B cell (primary cell): ENCODE measurements at regions of chr17 and their contacts with region 1.

Region 1: DNA sequence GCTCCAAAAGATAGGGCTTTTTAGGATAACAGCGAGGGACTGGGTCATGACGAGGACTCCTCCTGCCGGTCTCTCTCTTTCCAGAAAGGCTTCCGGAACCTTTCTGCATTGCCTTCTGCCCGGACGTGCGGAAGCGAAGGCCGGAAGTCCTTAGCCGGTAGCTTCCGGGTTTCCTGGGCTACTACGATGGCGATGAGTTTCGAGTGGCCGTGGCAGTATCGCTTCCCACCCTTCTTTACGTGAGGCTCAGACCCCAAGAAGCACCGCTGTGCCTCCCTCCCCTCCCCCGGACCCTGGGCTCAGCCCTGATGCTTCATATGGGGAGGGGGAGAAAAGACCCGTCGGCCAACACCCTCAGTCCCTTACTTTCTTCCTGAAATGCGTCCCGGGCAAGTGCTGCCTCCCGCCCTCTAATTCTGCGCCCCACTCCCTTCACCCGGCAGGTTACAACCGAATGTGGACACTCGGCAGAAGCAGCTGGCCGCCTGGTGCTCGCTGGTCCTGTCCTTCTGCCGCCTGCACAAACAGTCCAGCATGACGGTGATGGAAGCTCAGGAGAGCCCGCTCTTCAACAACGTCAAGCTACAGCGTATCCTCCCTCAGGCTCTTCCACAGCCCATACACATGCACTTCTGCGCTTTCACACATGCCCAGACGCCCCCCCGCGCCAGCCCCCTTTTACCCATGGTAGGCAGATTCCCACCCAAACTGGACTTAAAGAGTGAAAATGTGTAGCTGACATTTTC is at the start of gene VPS25:
- DNase-seq: peak; percentile 87
- ATAC-seq: peak; percentile 89
- H3K4me3 ChIP-seq: peak within 1 kb of the TSS; percentile 71 to 88 (median 82)
- H3K4me3 Mint-ChIP-seq: peak within 1 kb of the TSS; percentile 99
- H3K27ac ChIP-seq: peak within 1 kb of the TSS; percentile 81 to 85
- H3K27ac Mint-ChIP-seq: peak within 1 kb of the TSS; percentile 98
- H3K4me1 ChIP-seq: peaks cover 16 to 17% of the 10 kb centered on the region in 2 donors
- H3K4me1 Mint-ChIP-seq: peaks cover 23% of the 10 kb centered on the region
- H3K27me3 ChIP-seq: no peaks in the 10 kb centered on the region
- H3K27me3 Mint-ChIP-seq: no peaks in the 10 kb centered on the region
- CTCF ChIP-seq: no peak
- total RNA-seq, gene VPS25: 38.7 and 38.8 TPM in 2 replicates

Region 2: DNA sequence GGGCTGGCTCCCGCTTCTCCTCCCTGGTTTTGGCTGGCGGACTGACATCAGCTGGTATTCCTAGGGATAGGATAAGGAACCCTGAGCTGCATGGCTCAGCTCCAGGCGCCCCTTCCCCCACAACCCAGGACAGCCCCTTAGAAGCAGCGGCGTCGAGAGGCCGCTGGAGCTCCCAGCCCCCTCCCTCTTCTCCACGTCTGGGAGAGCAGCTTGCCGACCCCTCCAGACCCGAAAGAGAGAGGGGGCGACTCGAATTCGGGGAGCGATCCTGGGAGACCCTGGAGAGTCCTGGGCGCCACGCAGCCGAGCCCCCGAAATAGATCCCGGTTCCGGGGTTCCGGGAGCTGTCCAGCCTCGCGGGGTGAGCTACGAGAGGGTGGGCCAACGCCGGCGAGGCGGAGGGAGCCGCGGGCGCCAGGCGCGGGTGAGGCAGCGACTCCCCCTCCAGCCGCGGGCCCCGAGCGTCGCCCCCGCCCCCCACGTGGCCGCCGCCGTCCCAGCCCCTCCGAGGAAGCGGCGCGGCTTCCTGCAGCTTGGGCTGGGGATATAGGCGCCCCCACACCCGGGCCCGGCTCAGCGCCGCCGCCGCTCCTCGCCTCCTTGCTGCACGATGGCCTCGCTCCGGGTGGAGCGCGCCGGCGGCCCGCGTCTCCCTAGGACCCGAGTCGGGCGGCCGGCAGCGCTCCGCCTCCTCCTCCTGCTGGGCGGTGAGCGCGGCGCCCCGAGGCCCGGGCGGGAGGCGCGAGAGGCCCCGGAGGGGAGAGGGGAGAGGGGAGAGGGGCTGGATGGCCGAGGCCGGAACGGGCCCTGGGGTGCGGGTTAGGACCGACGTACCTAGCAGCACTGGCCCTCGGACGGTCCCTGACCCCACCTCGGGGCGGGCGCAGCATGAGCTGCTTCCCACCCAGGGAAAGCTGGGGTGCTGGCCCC is 12.5 kb before region 1 on chr17 and contains the start of gene RAMP2:
- CTCF ChIA-PET with region 1: interaction called, 22 read pairs
- POLR2A ChIA-PET with region 1: interaction called, 3 read pairs
- intact Hi-C with region 1: no loop called
- DNase-seq: peak; percentile 45
- ATAC-seq: peak; percentile 32
- H3K4me3 ChIP-seq: peak within 1 kb of the TSS in 4 of 5 experiments; percentile 13 to 54 (median 39)
- H3K4me3 Mint-ChIP-seq: peak within 1 kb of the TSS; percentile 85
- H3K27ac ChIP-seq: no peak within 1 kb of the TSS
- H3K27ac Mint-ChIP-seq: peak within 1 kb of the TSS; percentile 37
- H3K4me1 ChIP-seq: peaks cover 19 to 23% of the 10 kb centered on the region in 2 donors
- H3K4me1 Mint-ChIP-seq: peaks cover 23% of the 10 kb centered on the region
- H3K27me3 ChIP-seq: peaks cover 0 to 48% (median 18%) of the 10 kb centered on the region in 4 experiments
- H3K27me3 Mint-ChIP-seq: peaks cover 50% of the 10 kb centered on the region
- CTCF ChIP-seq: no peak
- total RNA-seq, gene RAMP2: not detected in 2 replicates

Region 3: GRCh38 chr17:42798383-42799380 is 25.2 kb after region 1 on chr17 and contains the starts of genes CNTD1 and COA3:
- CTCF ChIA-PET with region 1: no interaction called
- POLR2A ChIA-PET with region 1: interaction called, 9 read pairs
- intact Hi-C with region 1: loop called (anchors 1 kb)
- DNase-seq: peak; percentile 79
- ATAC-seq: peak; percentile 99
- H3K4me3 ChIP-seq: peak within 1 kb of the TSS; percentile 59 to 90 (median 76)
- H3K4me3 Mint-ChIP-seq: peak within 1 kb of the TSS; percentile 96
- H3K27ac ChIP-seq: peak within 1 kb of the TSS; percentile 4 to 69
- H3K27ac Mint-ChIP-seq: peak within 1 kb of the TSS; percentile 83
- H3K4me1 ChIP-seq: peaks cover 14 to 21% of the 10 kb centered on the region in 2 donors
- H3K4me1 Mint-ChIP-seq: peaks cover 27% of the 10 kb centered on the region
- H3K27me3 ChIP-seq: no peaks in the 10 kb centered on the region
- H3K27me3 Mint-ChIP-seq: peaks cover 5% of the 10 kb centered on the region
- CTCF ChIP-seq: no peak
- total RNA-seq, gene CNTD1: not detected in 2 replicates
- total RNA-seq, gene COA3: 31.9 and 32.1 TPM in 2 replicates

Region 4: DNA sequence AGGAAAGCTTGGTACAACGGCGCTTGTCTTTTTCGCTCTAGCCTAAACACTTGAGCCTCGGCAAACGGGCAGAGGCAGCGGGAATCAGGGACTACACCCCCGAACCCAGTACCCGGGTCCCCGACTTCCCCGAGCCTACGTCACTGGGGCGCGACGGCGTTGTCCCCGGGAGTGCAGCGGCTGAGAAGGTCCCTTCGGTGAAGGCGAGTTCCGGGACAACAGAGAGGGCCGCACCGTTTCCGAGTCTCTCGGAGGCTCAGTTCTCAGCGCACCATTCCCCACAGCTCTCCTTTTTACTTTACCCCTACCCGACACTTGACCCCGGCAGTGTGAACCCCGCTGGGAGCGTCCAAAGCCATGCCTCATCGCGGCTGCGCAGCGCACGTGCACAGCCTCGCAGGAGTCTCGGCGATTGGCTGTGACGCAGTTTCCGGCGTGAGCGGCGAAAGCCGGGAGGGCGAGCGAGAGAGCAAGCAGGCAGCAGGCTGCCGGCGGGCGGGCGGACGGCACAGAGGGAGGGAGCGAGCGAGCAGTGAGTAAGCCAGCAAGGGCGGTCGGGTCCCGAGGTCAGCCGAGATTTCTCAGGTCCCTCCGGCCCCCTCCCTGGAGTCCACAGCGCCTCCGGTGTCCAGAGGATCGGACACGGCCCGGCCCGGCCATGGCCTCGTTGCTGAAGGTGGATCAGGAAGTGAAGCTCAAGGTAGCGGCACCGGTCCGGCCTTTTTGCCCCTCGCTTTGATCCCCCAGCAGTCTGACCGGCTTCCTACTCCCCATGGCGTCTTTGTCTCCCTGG is 59.7 kb after region 1 on chr17 and contains the start of gene PSME3:
- CTCF ChIA-PET with region 1: no interaction called
- POLR2A ChIA-PET with region 1: no interaction called
- intact Hi-C with region 1: no loop called
- DNase-seq: peak; percentile 95
- ATAC-seq: peak; percentile 93
- H3K4me3 ChIP-seq: peak within 1 kb of the TSS; percentile 88 to 99 (median 92)
- H3K4me3 Mint-ChIP-seq: peak within 1 kb of the TSS; percentile 98
- H3K27ac ChIP-seq: peak within 1 kb of the TSS; percentile 84 to 94
- H3K27ac Mint-ChIP-seq: peak within 1 kb of the TSS; percentile 98
- H3K4me1 ChIP-seq: peaks cover 12 to 20% of the 10 kb centered on the region in 2 donors
- H3K4me1 Mint-ChIP-seq: peaks cover 24% of the 10 kb centered on the region
- H3K27me3 ChIP-seq: no peaks in the 10 kb centered on the region
- H3K27me3 Mint-ChIP-seq: no peaks in the 10 kb centered on the region
- CTCF ChIP-seq: no peak
- total RNA-seq, gene PSME3: 70.3 and 76.2 TPM in 2 replicates

Region 5: GRCh38 chr17:42944211-42944610 is 170.7 kb after region 1 on chr17:
- CTCF ChIA-PET with region 1: no interaction called
- POLR2A ChIA-PET with region 1: no interaction called
- intact Hi-C with region 1: no loop called
- DNase-seq: no peak
- ATAC-seq: no peak
- H3K4me3 ChIP-seq: no peak overlapping the region
- H3K4me3 Mint-ChIP-seq: no peak overlapping the region
- H3K27ac ChIP-seq: no peak overlapping the region
- H3K27ac Mint-ChIP-seq: no peak overlapping the region
- H3K4me1 ChIP-seq: no peaks in the 10 kb centered on the region
- H3K4me1 Mint-ChIP-seq: no peaks in the 10 kb centered on the region
- H3K27me3 ChIP-seq: peaks cover 0 to 6% (median 1%) of the 10 kb centered on the region in 4 experiments
- H3K27me3 Mint-ChIP-seq: no peaks in the 10 kb centered on the region
- CTCF ChIP-seq: no peak